ENCODE measurements at regions of chr2 and their contacts with region 1.

Region 1: DNA sequence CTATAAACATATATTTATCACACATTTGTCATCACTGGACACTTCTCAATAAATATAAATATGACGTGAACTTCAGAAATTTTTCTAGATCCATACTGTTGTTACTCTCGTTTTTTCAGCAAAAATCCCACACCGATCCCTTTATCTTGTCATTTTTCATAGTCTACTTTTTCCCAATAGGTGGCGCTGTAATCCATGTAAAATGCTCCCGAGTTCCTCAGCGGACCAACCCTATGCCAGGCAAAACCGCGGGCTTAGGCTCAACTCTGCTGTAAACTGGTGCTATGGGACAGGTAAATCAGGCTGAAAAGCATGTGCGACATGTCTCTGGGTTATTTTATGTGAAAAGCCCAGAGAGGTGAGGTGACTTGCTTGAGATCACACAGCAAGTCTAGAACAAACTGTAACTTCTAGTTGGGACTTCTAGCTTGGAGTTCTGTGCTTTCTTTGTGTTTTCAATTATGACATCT is 104.0 kb downstream of the COBLL1 start:
- DNase-seq: peak; percentile 73
- ATAC-seq: peak; percentile 94
- H3K4me3 ChIP-seq: no peak overlapping the region
- H3K27ac ChIP-seq: no peak overlapping the region
- H3K4me1 ChIP-seq: no peaks in the 10 kb centered on the region
- H3K27me3 ChIP-seq: no peaks in the 10 kb centered on the region
- CTCF ChIP-seq: peak; percentile 70

Region 2: DNA sequence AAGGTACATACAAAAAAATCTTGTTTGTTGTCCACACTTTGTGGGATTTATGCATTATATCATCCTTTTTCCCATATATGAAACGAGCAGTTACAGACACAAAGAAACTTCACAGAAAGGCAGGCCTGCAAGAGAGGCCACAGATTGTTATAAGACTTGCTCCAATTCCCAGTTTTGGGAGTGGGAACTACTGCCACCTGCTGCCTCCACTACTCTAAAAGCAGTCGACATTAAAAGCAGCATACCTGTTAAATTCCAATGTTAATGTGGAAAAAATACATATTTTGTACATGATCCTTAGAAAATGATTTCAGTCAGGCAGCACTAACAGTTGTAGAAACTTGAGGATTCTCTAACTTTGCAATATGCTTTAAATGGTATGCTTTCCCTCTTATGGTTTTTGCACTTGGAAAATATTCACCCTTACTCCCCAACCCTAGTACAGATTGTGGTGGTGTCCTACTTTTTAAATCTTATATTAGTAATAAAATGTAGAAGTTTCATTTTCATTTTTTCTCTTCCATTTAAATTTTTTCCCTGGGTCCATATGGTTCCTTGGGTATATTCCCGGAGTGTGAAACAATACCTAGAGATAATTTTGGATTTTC is 179.8 kb after region 1 on chr2:
- intact Hi-C with region 1: loop called (anchors 10 kb)
- DNase-seq: no peak
- ATAC-seq: peak; percentile 78
- H3K4me3 ChIP-seq: no peak overlapping the region
- H3K27ac ChIP-seq: no peak overlapping the region
- H3K4me1 ChIP-seq: peaks cover 7% of the 10 kb centered on the region
- H3K27me3 ChIP-seq: no peaks in the 10 kb centered on the region
- CTCF ChIP-seq: peak; percentile 61

Measured in upper lobe of right lung (tissue), 1 donor.